ENCODE measurements at regions of chr19 and their contacts with region 1.

Region 1: DNA sequence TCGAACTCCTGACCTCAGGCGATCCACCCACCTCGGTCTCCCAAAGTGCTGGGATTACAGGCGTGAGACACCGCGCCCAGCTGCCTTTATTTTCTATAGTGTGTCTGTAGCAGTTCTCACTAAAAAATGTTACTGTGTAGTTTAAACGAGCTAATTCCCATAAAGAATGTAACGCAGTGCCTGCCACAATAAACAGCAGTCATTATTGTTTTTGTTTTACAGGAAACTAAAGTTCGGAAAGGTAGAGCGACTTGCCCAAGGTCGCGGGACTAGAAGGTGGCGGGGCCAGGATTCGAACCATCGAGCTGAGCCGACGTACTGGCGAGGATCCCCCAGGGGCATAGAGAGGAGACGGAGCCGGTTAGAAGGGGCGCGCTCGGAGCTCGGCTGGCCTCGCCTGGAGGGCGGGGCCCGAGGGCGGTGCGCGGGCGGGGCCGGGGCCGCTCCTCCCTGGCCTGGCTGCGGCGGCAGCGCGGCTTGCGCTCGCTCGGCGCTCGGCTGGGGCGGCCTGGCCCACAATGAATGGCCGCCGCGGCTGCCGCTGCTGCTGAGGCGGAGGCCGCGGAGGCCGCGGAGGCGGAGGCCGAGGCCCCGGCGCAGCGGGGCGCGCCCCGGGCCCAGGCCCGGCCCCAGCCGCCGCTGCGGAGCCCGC is at the start of gene NACC1:
- DNase-seq: peak; percentile 98
- H3K4me3 Mint-ChIP-seq: peak within 1 kb of the TSS; percentile 97
- H3K27ac Mint-ChIP-seq: peak within 1 kb of the TSS; percentile 97
- H3K4me1 Mint-ChIP-seq: peaks cover 39% of the 10 kb centered on the region
- H3K27me3 Mint-ChIP-seq: no peaks in the 10 kb centered on the region
- total RNA-seq, gene NACC1: 118 and 121 TPM in 2 replicates

Region 2: GRCh38 chr19:13104360-13104847 is 13.5 kb before region 1 on chr19:
- intact Hi-C with region 1: loop called (anchors 1 kb)
- DNase-seq: peak; percentile 92
- H3K4me3 Mint-ChIP-seq: peak overlapping the region; percentile 87
- H3K27ac Mint-ChIP-seq: peak overlapping the region; percentile 85
- H3K4me1 Mint-ChIP-seq: peaks cover 30% of the 10 kb centered on the region
- H3K27me3 Mint-ChIP-seq: peaks cover 1% of the 10 kb centered on the region

Region 3: DNA sequence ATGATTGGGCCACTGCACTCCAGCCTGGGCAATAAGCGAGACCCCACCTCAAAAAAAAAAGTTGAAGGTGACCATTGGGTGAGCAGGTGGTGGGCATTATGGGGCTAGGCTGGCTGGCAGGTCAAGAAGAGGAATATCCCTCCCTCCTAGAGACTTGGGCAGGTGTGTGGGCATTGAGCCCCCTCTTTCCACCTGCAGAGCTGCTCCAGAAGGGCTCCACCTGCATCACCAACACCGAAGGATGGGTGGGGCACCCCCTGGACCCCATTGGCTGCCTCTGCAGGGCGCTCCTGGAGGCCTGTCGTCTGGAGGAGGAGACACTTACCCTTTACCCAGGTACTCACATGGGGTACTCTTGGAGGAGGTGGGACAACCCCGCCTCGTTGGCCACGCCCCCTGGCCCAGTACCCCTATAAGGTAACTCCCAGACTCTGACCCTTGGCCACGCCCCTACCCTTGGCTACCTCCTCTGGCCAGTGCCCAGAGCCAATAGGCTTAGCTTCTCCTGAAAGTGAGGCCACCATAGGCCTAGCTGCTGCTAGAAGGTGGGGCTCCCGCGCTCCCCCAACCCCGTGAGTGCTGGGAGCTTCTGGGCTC is 699.2 kb after region 1 on chr19:
- intact Hi-C with region 1: no loop called
- DNase-seq: peak; percentile 72
- H3K4me3 Mint-ChIP-seq: peak overlapping the region; percentile 30
- H3K27ac Mint-ChIP-seq: no peak overlapping the region
- H3K4me1 Mint-ChIP-seq: peaks cover 7% of the 10 kb centered on the region
- H3K27me3 Mint-ChIP-seq: no peaks in the 10 kb centered on the region

Measured in activated CD4-positive, alpha-beta T cell treated with anti-CD3 and anti-CD28 coated beads, Interleukin-2, amount 10 ng/mL, durations not matched to agents 24 days and 14 days (primary cell).